Aorta (tissue), 5 donors: ENCODE measurements at regions of chr18 and their contacts with region 1.

Region 1: GRCh38 chr18:58135701-58136331 is 91.8 kb downstream of the NEDD4L start:
- DNase-seq: no peak
- ATAC-seq: peak; percentile 80
- H3K4me3 ChIP-seq: no peak overlapping the region
- H3K27ac ChIP-seq: no peak overlapping the region
- H3K4me1 ChIP-seq: no peaks in the 10 kb centered on the region
- H3K27me3 ChIP-seq: no peaks in the 10 kb centered on the region

Region 2: GRCh38 chr18:58076052-58076451 is 59.8 kb before region 1 on chr18:
- intact Hi-C with region 1: loop called in 1 of 2 experiments (anchors 2 kb)
- DNase-seq: no peak
- ATAC-seq: no peak
- H3K4me3 ChIP-seq: no peak overlapping the region
- H3K27ac ChIP-seq: no peak overlapping the region
- H3K4me1 ChIP-seq: no peaks in the 10 kb centered on the region
- H3K27me3 ChIP-seq: no peaks in the 10 kb centered on the region